Mammary epithelial cell (primary cell): ENCODE measurements at regions of chr10 and their contacts with region 1.

Region 1: GRCh38 chr10:71912431-71912830 is 51.8 kb upstream of the CHST3 start:
- DNase-seq: no peak
- H3K4me3 ChIP-seq: no peak overlapping the region
- H3K27ac ChIP-seq: no peak overlapping the region
- H3K4me1 ChIP-seq: no peaks in the 10 kb centered on the region
- H3K27me3 ChIP-seq: no peaks in the 10 kb centered on the region
- CTCF ChIP-seq: peak; percentile 21 to 30

Region 2: GRCh38 chr10:71671994-71672946 is 240.2 kb before region 1 on chr10:
- CTCF ChIA-PET with region 1: no interaction called
- dilution Hi-C with region 1: no loop called
- in situ Hi-C with region 1: no loop called
- intact Hi-C with region 1: no loop called
- DNase-seq: no peak
- H3K4me3 ChIP-seq: no peak overlapping the region
- H3K27ac ChIP-seq: no peak overlapping the region
- H3K4me1 ChIP-seq: no peaks in the 10 kb centered on the region
- H3K27me3 ChIP-seq: peaks cover 3% of the 10 kb centered on the region
- CTCF ChIP-seq: no peak

Region 3: GRCh38 chr10:71845410-71846405 is 66.7 kb before region 1 on chr10:
- CTCF ChIA-PET with region 1: no interaction called
- dilution Hi-C with region 1: loop called (anchors 5 kb)
- in situ Hi-C with region 1: no loop called
- intact Hi-C with region 1: no loop called
- DNase-seq: no peak
- H3K4me3 ChIP-seq: no peak overlapping the region
- H3K27ac ChIP-seq: no peak overlapping the region
- H3K4me1 ChIP-seq: peaks cover 14% of the 10 kb centered on the region
- H3K27me3 ChIP-seq: no peaks in the 10 kb centered on the region
- CTCF ChIP-seq: no peak

Region 4: GRCh38 chr10:72038458-72039001 is 126.1 kb after region 1 on chr10:
- CTCF ChIA-PET with region 1: no interaction called
- dilution Hi-C with region 1: no loop called
- in situ Hi-C with region 1: no loop called
- intact Hi-C with region 1: no loop called
- DNase-seq: peak; percentile 58
- H3K4me3 ChIP-seq: no peak overlapping the region
- H3K27ac ChIP-seq: no peak overlapping the region
- H3K4me1 ChIP-seq: no peaks in the 10 kb centered on the region
- H3K27me3 ChIP-seq: no peaks in the 10 kb centered on the region
- CTCF ChIP-seq: no peak

Region 5: GRCh38 chr10:72273410-72274212 is 361.2 kb after region 1 on chr10 and contains the start of gene DDIT4:
- CTCF ChIA-PET with region 1: no interaction called
- dilution Hi-C with region 1: no loop called
- in situ Hi-C with region 1: no loop called
- intact Hi-C with region 1: no loop called
- DNase-seq: peak; percentile 99
- H3K4me3 ChIP-seq: peak within 1 kb of the TSS; percentile 59 to 78 (median 66)
- H3K27ac ChIP-seq: peak within 1 kb of the TSS; percentile 93
- H3K4me1 ChIP-seq: peaks cover 27% of the 10 kb centered on the region
- H3K27me3 ChIP-seq: no peaks in the 10 kb centered on the region
- CTCF ChIP-seq: no peak
- total RNA-seq, gene DDIT4: 772 to 1,235 TPM

Region 6: GRCh38 chr10:72308320-72308987 is 396.0 kb after region 1 on chr10:
- CTCF ChIA-PET with region 1: no interaction called
- dilution Hi-C with region 1: no loop called
- in situ Hi-C with region 1: no loop called
- intact Hi-C with region 1: no loop called
- DNase-seq: peak; percentile 92
- H3K4me3 ChIP-seq: no peak overlapping the region
- H3K27ac ChIP-seq: peak overlapping the region; percentile 65
- H3K4me1 ChIP-seq: peaks cover 42% of the 10 kb centered on the region
- H3K27me3 ChIP-seq: no peaks in the 10 kb centered on the region
- CTCF ChIP-seq: no peak